HepG2 (cell line): ENCODE measurements at regions of chr2 and their contacts with region 1.

Region 1: GRCh38 chr2:10302479-10303180 is at the start of gene HPCAL1:
- DNase-seq: peak; percentile 96
- ATAC-seq: peak; percentile 89
- H3K4me3 ChIP-seq: peak within 1 kb of the TSS; percentile 68 to 93 (median 91)
- H3K27ac ChIP-seq: peak within 1 kb of the TSS; percentile 88
- H3K4me1 ChIP-seq: peaks cover 64% of the 10 kb centered on the region
- H3K27me3 ChIP-seq: no peaks in the 10 kb centered on the region; a peak in 1 of 5 replicates
- CTCF ChIP-seq: peak; percentile 78
- EP300 ChIP-seq: peak; percentile 18 to 66; a peak in 2 of 4 replicates
- POLR2A ChIP-seq: peak; percentile 59 to 83; a peak in 3 of 4 replicates
- RAD21 ChIP-seq: peak; percentile 80
- total RNA-seq, gene HPCAL1: 23.3 and 29.9 TPM in 2 replicates

Region 2: DNA sequence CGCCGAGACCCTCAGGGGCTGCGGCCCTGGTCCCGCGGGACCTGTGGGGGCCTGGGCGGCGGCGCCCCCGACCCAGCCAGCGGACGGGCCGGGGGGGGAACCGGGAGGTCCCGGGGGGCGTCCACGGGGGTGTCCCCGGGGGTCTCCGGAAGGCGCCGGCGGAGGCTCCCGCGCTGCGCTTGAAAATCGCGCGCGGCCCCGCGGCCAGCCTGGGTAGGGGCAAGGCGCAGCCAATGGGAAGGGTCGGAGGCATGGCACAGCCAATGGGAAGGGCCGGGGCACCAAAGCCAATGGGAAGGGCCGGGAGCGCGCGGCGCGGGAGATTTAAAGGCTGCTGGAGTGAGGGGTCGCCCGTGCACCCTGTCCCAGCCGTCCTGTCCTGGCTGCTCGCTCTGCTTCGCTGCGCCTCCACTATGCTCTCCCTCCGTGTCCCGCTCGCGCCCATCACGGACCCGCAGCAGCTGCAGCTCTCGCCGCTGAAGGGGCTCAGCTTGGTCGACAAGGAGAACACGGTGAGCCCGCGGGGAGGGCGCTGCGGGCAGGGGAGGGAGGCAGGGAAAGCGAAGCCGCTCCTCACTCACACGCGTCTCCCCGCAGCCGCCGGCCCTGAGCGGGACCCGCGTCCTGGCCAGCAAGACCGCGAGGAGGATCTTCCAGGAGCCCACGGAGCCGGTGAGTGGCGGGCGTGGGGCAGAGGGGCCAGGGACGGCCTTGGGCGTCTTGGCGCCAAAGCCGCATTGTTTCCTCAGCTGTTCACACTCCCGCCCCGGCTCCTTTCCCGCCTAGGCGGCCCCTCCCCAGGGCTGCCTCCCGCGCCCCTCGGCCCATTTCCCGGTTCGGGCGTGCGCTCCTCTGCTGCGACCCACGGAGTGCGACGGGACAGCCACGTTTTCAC is 180.0 kb before region 1 on chr2 and contains the start of gene RRM2:
- CTCF ChIA-PET with region 1: no interaction called
- POLR2A ChIA-PET with region 1: interaction called, 4 read pairs
- in situ Hi-C with region 1: no loop called
- intact Hi-C with region 1: loop called (anchors 2 kb)
- DNase-seq: peak; percentile 95
- ATAC-seq: peak; percentile 86
- H3K4me3 ChIP-seq: peak within 1 kb of the TSS; percentile 70 to 99 (median 93)
- H3K27ac ChIP-seq: peak within 1 kb of the TSS; percentile 92
- H3K4me1 ChIP-seq: peaks cover 81% of the 10 kb centered on the region
- H3K27me3 ChIP-seq: no peaks in the 10 kb centered on the region
- CTCF ChIP-seq: peak; percentile 35
- EP300 ChIP-seq: 0 out of 4 replicates have a peak, but pooled peaks of 1 of the 2 experiments have one; percentile 40
- POLR2A ChIP-seq: peak; percentile 99 to 100
- RAD21 ChIP-seq: peak; percentile 49; the same call in 1 of the 2 replicates
- total RNA-seq, gene RRM2: 150 and 191 TPM in 2 replicates

Region 3: DNA sequence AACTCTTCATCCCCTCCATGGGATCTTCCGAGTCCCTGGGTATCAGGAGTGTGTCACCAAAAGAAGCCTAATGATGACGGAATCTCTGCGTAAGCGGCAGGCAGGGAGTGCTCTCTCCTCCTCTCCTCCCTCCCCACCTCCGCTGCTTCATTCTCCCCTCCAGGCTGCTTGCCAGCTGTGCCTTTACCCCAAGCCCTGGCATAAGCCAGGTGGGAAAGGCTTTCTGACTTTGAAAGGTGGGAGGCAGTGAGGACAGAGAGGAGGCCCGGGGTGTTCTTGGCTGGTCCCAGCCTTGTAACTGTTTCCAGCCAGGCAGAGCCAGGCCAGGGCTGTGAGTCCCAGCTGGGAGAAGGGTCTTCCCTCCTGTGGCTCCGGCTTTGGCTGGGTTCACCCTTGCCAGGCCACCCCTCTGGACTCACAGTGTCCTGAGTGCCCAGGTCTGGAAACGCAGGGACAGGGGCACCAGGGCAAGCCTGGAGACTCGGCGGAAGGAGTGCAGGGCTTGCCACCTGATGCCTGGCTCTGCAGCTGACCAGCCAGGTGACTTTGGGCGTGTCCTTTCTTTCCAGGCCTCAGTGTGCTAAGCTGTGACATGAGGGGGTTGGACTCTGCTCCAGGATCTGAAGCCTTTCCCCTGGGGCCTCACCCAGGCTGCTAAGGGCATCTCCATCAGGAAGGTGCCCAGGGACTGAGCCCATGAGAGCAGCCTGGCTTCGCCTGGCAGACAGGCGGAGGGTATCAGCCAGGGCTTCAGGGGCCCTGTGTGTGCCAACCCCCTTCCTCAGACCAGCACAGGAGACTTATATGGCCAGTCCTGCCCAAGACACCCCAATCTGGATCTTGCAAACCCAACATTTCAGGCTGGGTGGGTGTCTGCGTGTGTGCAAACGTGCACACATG is 32.7 kb before region 1 on chr2:
- CTCF ChIA-PET with region 1: interaction called, 7 read pairs
- POLR2A ChIA-PET with region 1: interaction called, 23 read pairs
- in situ Hi-C with region 1: no loop called
- intact Hi-C with region 1: loop called (anchors 1 kb)
- DNase-seq: no peak
- ATAC-seq: peak; percentile 12
- H3K4me3 ChIP-seq: peak overlapping the region in 1 of 3 experiments; percentile 50; a peak in 1 of 6 replicates
- H3K27ac ChIP-seq: no peak overlapping the region
- H3K4me1 ChIP-seq: peaks cover 63% of the 10 kb centered on the region
- H3K27me3 ChIP-seq: peaks cover 12 to 52% of the 10 kb centered on the region in 2 experiments
- CTCF ChIP-seq: no peak
- EP300 ChIP-seq: no peak
- POLR2A ChIP-seq: no peak
- RAD21 ChIP-seq: no peak

Region 4: DNA sequence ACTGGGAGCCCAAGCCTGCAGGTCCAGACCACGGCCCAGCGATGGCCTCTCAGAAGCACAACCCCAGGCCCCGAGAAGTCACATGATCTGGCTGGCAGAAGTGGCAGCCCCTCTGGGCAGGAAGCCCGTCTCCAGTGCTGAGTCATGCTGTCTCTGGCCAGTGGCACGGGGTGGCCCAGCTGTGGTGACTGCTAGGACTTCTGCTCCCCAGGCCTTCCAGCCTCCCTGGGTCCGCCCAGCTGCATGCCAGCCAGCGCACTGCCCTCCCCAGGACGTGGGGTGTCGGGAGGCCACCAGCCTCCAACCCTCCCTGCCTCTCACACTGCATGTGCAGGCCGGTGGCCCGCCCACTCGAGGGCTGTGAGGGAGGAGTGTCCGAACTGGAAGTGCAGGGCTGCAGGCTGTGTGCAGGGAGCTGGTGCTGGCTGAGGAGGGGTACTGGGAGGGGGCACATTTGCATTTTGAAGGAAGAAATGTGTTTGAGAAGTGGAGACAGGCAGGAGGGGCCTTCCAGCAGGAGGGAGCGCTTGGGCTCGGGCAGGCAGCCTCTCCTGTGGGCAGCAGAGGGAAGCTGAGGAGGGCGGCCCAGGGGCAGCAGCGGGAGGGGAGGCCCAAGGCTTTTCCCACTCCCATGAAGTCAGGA is 17.0 kb before region 1 on chr2:
- CTCF ChIA-PET with region 1: no interaction called
- POLR2A ChIA-PET with region 1: interaction called, 105 read pairs
- in situ Hi-C with region 1: no loop called
- intact Hi-C with region 1: loop called (anchors 2 kb)
- DNase-seq: peak; percentile 77
- ATAC-seq: peak; percentile 80
- H3K4me3 ChIP-seq: peak overlapping the region; percentile 13 to 52 (median 32); a peak in 5 of 6 replicates
- H3K27ac ChIP-seq: peak overlapping the region; percentile 15
- H3K4me1 ChIP-seq: peaks cover 48% of the 10 kb centered on the region
- H3K27me3 ChIP-seq: no peaks in the 10 kb centered on the region
- CTCF ChIP-seq: peak; percentile 44
- EP300 ChIP-seq: peak in 1 of 2 experiments; percentile 40; a peak in 2 of 4 replicates
- POLR2A ChIP-seq: peak in 1 of 2 experiments; percentile 28; a peak in 1 of 4 replicates
- RAD21 ChIP-seq: no peak

Region 5: GRCh38 chr2:10369269-10370255 is 66.9 kb after region 1 on chr2:
- CTCF ChIA-PET with region 1: no interaction called
- POLR2A ChIA-PET with region 1: interaction called, 39 read pairs
- in situ Hi-C with region 1: no loop called
- intact Hi-C with region 1: no loop called
- DNase-seq: peak; percentile 83
- ATAC-seq: peak; percentile 76
- H3K4me3 ChIP-seq: peak overlapping the region; percentile 27 to 69 (median 41); a peak in 5 of 6 replicates
- H3K27ac ChIP-seq: peak overlapping the region; percentile 49
- H3K4me1 ChIP-seq: peaks cover 66% of the 10 kb centered on the region
- H3K27me3 ChIP-seq: no peaks in the 10 kb centered on the region
- CTCF ChIP-seq: peak; percentile 45
- EP300 ChIP-seq: peak in 1 of 2 experiments; percentile 24; a peak in 1 of 4 replicates
- POLR2A ChIP-seq: no peak
- RAD21 ChIP-seq: peak; percentile 34

Region 6: DNA sequence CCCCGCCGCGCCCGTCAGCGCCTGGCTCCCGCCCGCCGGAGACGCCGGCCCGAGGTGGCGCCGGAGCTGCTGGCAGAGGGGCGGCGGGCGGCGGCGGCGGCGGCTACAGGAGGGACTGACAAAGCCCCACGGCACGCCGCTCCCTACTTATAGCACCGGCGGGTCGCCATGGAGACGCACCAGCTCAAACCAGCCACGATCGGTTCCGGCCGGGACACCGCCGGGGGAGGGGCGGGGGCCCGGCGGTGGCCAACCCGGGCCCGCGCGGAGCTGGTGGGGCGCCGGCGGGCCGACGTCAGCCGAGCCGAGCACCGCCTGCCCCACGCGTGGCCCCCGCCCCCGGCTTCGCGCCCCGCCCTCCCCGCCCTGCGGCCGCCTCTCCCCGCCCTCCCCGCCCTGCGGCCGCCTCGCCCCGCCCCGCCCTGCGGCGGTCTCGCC is 145.6 kb after region 1 on chr2 and contains the start of gene ODC1:
- CTCF ChIA-PET with region 1: no interaction called
- POLR2A ChIA-PET with region 1: interaction called, 35 read pairs
- in situ Hi-C with region 1: no loop called
- intact Hi-C with region 1: no loop called
- DNase-seq: peak; percentile 88
- ATAC-seq: peak; percentile 62
- H3K4me3 ChIP-seq: peak within 1 kb of the TSS; percentile 58 to 75 (median 70)
- H3K27ac ChIP-seq: peak within 1 kb of the TSS; percentile 90
- H3K4me1 ChIP-seq: peaks cover 67% of the 10 kb centered on the region
- H3K27me3 ChIP-seq: no peaks in the 10 kb centered on the region
- CTCF ChIP-seq: no peak
- EP300 ChIP-seq: no peak
- POLR2A ChIP-seq: no peak; a peak in 1 of 4 replicates
- RAD21 ChIP-seq: peak; percentile 49; the same call in 1 of the 2 replicates
- total RNA-seq, gene ODC1: 371 and 422 TPM in 2 replicates